ENCODE measurements at regions of chr5 and their contacts with region 1.

Region 1: DNA sequence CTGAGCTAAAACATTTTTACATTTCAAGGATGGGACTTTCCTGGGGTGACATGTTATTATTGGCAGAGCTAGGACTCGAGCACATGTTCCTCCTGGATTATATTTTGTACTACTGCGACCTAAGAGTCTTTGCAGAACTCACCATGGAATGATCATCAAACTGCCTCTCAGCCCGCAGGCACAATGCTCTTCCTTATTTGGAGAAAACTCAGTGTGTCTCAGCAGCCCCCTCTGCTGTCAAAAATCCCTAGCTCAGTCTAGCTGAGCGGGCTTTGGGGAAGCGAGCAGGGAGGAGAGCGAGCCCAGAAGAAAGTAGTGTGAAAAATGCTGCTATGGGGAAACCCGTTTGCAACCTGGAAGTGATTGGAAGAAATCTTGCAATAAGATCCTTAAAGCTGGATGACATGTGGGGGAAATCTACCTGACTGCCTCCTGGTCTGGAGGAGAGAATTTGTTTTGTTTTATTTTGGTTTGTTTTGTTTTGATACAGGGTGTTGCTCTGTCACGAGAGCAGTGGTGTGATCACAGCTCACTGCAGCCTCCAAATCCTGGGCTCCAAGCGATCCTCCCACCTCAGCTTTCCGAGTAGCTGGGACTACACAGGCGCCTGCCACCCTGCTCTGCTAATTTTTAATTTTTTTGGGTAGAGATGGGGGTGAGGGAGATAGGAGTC is 89.9 kb upstream of the CLINT1 start:
- DNase-seq: peak; percentile 74
- CTCF ChIP-seq: peak; percentile 83

Region 2: GRCh38 chr5:157820593-157821252 is 128.2 kb before region 1 on chr5:
- in situ Hi-C with region 1: loop called (anchors 10 kb)
- DNase-seq: peak; percentile 31
- CTCF ChIP-seq: peak; percentile 13